ENCODE measurements at regions of chr17 and their contacts with region 1.

Region 1: GRCh38 chr17:5078106-5079028 is at the start of gene ZFP3:
- DNase-seq: peak; percentile 81 to 89
- ATAC-seq: peak; percentile 98
- H3K4me3 ChIP-seq: peak within 1 kb of the TSS; percentile 88 to 98 (median 94)
- H3K27ac ChIP-seq: peak within 1 kb of the TSS; percentile 91 to 98 (median 97)
- H3K4me1 ChIP-seq: peaks cover 17 to 19% of the 10 kb centered on the region in 2 donors
- H3K27me3 ChIP-seq: no peaks in the 10 kb centered on the region
- CTCF ChIP-seq: peak in 2 of 5 experiments; percentile 3 to 31
- POLR2A ChIP-seq: peak; percentile 85 to 90
- total RNA-seq, gene ZFP3: 6.1 to 11.4 (median 7.6) TPM

Region 2: GRCh38 chr17:5011928-5012327 is 66.4 kb before region 1 on chr17:
- in situ Hi-C with region 1: no loop called
- intact Hi-C with region 1: no loop called
- DNase-seq: no peak
- ATAC-seq: no peak
- H3K4me3 ChIP-seq: no peak overlapping the region
- H3K27ac ChIP-seq: peak overlapping the region in 1 of 4 donors; percentile 29
- H3K4me1 ChIP-seq: no peaks in the 10 kb centered on the region
- H3K27me3 ChIP-seq: no peaks in the 10 kb centered on the region
- CTCF ChIP-seq: no peak
- POLR2A ChIP-seq: no peak

Region 3: GRCh38 chr17:5049314-5049895 is 29.0 kb before region 1 on chr17:
- in situ Hi-C with region 1: no loop called
- intact Hi-C with region 1: no loop called
- DNase-seq: no peak
- ATAC-seq: no peak
- H3K4me3 ChIP-seq: no peak overlapping the region
- H3K27ac ChIP-seq: peak overlapping the region; percentile 6 to 63 (median 38)
- H3K4me1 ChIP-seq: peaks cover 0 to 8% of the 10 kb centered on the region in 2 donors
- H3K27me3 ChIP-seq: no peaks in the 10 kb centered on the region
- CTCF ChIP-seq: no peak
- POLR2A ChIP-seq: no peak

Region 4: GRCh38 chr17:5111402-5112204 is 33.2 kb after region 1 on chr17 and contains the start of gene ZNF232:
- in situ Hi-C with region 1: no loop called
- intact Hi-C with region 1: loop called (anchors 1 kb)
- DNase-seq: peak; percentile 90 to 93
- ATAC-seq: peak; percentile 87 to 94
- H3K4me3 ChIP-seq: peak within 1 kb of the TSS; percentile 90 to 95 (median 93)
- H3K27ac ChIP-seq: peak within 1 kb of the TSS; percentile 87 to 94 (median 89)
- H3K4me1 ChIP-seq: peaks cover 14 to 15% of the 10 kb centered on the region in 2 donors
- H3K27me3 ChIP-seq: peaks cover 22 to 24% (median 23%) of the 10 kb centered on the region in 3 donors
- CTCF ChIP-seq: no peak
- POLR2A ChIP-seq: peak; percentile 72 to 74
- total RNA-seq, gene ZNF232: 5.8 to 13.5 (median 7.7) TPM